ENCODE measurements at regions of chr5 and their contacts with region 1.

Region 1: DNA sequence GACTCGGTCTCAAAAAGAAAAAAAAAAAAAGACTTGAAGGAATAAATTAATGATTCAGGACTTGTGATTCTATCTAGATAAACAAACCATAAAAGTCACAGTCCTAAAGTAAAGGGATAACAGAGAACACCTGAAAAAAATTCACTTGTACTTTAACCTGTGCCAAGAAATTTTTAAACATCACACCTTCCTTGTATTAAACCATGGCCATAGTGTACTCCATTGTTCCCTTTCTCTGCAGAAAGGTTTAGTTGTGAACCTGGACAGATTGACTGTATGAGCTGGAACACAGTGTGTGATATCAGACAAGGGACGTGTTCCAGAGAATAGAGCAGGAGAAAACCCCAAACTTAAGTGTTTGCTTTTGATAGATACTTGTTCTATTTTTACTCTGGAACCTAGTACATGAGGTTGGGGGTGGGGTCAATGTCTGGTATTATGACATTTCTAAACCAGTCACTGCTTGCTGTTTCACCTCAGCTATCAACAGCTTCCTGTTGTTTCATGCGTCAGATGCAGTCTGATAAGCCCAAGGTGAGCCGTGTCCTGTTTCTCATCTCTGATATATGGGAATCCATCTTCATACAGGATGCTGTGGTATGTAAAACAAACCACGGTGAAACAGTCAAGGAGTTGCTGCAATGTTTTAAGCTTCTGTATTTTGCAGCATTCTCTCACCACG is 62.5 kb upstream of the ITGA1 start:
- DNase-seq: no peak
- ATAC-seq: peak in 2 of 4 donors; percentile 33 to 74
- H3K4me3 ChIP-seq: no peak overlapping the region
- H3K27ac ChIP-seq: peak overlapping the region in 11 of 12 donors; percentile 14 to 76 (median 58)
- H3K4me1 ChIP-seq: peaks cover 0 to 43% (median 23%) of the 10 kb centered on the region in 12 donors
- H3K27me3 ChIP-seq: no peaks in the 10 kb centered on the region
- CTCF ChIP-seq: no peak
- POLR2A ChIP-seq: no peak

Region 2: DNA sequence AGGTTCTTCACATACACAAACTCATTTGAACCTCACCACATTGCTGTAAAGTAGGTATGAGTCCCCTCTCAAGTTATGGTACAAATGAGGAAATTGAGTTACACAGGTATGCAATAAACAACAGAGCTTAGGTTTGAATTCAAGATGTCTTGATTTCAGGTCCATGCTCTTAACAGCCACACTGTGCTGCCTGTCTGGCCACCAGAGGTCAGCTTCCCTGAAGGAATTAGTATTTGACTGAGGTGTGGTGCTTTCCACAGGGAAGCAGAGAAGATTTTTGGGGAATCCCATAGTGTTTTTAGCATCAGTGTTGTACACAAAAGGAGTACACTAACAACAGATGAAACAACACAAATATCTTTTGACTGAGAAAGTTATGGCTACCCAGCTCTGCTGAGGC is 31.9 kb before region 1 on chr5:
- intact Hi-C with region 1: loop called in 1 of 10 experiments (anchors 5 kb)
- DNase-seq: peak; percentile 40 to 46 (median 43)
- ATAC-seq: peak; percentile 54 to 81 (median 64)
- H3K4me3 ChIP-seq: no peak overlapping the region
- H3K27ac ChIP-seq: peak overlapping the region in 5 of 12 donors; percentile 35 to 56 (median 47)
- H3K4me1 ChIP-seq: peaks cover 0 to 46% (median 15%) of the 10 kb centered on the region in 12 donors
- H3K27me3 ChIP-seq: no peaks in the 10 kb centered on the region
- CTCF ChIP-seq: peak; percentile 55 to 85 (median 67)
- POLR2A ChIP-seq: no peak

Region 3: DNA sequence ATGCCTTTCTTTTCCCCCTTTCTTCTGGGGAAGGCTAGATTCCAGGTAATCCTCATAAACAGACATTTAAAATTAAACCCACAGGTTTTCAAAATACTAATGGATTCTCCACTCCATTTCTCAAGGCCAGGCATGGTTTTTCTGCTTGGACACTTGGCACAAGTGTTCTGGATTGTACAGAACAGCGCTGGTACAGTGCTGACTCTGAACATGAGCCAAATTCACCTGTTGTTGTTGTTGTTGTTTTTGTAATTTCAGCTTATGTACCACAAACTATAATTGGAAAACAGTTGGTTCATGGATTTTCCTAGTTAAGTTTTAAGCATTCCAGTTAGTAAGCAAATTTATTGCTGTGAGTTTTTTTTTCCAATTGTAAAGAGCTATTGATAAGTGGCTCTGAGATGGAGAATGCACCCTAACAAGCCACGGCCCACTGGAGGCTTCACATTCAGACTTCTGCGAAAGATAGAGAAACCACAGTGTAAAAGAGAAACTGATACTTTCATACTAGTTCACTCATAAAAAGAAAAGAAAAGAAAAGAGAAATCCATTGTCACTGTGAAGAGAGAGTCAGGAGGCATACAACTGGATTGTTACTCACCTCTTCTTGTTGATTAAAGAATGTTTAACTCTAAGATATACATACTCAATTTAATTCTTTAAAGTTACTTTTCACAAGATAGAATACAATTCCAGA is 46.3 kb after region 1 on chr5:
- intact Hi-C with region 1: loop called in 2 of 10 experiments (anchors 5 kb)
- DNase-seq: no peak
- ATAC-seq: no peak
- H3K4me3 ChIP-seq: no peak overlapping the region
- H3K27ac ChIP-seq: peak overlapping the region in 4 of 12 donors; percentile 10 to 70 (median 53)
- H3K4me1 ChIP-seq: peaks cover 0 to 30% (median 0%) of the 10 kb centered on the region in 12 donors
- H3K27me3 ChIP-seq: no peaks in the 10 kb centered on the region
- CTCF ChIP-seq: no peak
- POLR2A ChIP-seq: no peak